Dorsolateral prefrontal cortex (tissue), 120 donors: ENCODE measurements at regions of chr22 and their contacts with region 1.

Region 1: DNA sequence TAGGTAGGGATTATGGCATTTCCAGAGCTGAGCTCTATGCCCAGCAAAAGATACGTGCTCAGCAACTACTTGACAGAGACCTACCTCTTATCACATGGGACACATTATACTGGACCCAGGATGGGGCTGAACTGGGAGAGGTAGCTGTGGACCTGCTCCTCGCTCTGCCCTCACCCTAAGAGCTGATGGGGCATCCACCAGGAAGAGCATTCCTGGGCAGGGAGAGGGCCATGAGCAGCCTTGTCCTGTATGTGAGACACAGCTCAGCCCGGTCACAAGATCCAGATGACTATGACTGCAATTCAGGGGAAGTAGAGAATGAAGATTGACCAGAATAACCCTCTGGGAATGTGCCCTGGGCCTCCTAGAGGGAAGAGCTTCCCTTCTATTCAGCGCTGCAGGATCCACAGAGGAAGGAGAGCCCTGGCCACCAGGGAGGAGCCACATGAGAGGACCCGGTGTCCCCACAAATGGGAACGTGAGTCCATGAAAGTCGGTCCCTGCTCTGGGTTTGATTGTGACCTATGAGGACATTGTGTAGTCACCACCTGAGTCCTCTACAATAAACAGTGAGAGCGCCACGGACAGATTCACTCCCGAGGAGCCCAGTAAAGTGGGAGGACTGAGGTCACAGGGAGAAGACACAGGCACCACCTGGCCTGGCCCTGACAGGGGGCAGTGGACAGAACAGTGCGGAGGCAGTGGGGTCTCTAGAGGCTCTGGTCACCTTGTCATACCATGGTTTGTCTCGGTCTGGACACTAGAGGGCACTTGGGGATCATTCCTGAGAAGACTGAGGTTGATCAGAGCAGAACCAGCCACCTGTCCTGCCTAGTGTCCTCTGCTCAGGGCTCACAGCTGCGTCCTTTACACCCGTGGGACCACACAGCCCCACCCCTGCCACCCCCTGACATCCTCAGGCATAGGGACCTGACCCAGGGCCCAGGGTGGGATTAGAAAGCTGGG is 99.5 kb downstream of the ZNF280B start:
- DNase-seq: no peak
- H3K4me3 ChIP-seq: no peak overlapping the region
- H3K27ac ChIP-seq: no peak overlapping the region
- H3K27me3 ChIP-seq: peaks cover 0 to 38% (median 3%) of the 10 kb centered on the region in 45 donors
- CTCF ChIP-seq: peak in 44 of 56 donors; percentile 10 to 59 (median 40)

Region 2: GRCh38 chr22:22362936-22363335 is 46.1 kb before region 1 on chr22:
- intact Hi-C with region 1: loop called in 1 of 2 experiments (anchors 5 kb)
- DNase-seq: no peak
- H3K4me3 ChIP-seq: no peak overlapping the region
- H3K27ac ChIP-seq: no peak overlapping the region
- H3K27me3 ChIP-seq: peaks cover 0 to 44% (median 0%) of the 10 kb centered on the region in 45 donors
- CTCF ChIP-seq: no peak